GM18951 (cell line): ENCODE measurements at regions of chr1 and their contacts with region 1.

Region 1: DNA sequence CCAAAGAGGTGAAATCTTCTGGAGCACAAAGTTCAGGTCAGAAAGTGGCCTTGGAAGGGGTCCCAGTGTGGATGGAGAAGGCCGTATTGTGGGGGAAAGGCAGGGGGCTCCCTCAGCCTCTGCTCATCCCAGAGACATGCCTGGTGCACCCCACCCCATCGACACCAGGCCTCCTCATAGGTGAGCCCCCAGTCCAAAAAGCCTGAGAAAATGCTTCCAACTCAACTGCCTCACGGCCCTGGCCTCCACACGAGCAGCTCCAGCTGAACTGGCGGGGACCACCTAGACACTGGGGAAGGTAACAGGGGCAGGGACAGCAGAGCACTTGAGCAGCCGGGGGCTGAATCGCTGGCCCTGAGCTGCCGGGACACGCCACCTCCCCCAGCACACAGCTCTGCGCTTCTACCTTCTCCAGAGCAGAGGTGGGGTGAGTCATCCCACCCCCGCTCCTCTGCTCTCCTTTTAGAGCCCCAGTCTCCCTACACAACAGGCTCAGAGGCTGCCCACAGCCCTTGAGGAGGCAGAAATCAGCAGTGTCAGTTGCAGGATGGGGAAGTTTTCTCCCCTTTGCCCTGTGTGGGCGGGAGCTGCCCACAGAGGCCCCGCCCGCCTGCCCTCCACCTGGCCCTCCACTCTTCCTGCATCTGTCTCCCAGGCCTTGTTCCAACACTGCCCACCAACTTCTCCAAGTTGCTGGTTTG is 94.5 kb downstream of the STUM start:
- POLR2A ChIP-seq: no peak

Region 2: GRCh38 chr1:226466296-226466695 is 176.7 kb before region 1 on chr1:
- in situ Hi-C with region 1: no loop called
- POLR2A ChIP-seq: no peak

Region 3: DNA sequence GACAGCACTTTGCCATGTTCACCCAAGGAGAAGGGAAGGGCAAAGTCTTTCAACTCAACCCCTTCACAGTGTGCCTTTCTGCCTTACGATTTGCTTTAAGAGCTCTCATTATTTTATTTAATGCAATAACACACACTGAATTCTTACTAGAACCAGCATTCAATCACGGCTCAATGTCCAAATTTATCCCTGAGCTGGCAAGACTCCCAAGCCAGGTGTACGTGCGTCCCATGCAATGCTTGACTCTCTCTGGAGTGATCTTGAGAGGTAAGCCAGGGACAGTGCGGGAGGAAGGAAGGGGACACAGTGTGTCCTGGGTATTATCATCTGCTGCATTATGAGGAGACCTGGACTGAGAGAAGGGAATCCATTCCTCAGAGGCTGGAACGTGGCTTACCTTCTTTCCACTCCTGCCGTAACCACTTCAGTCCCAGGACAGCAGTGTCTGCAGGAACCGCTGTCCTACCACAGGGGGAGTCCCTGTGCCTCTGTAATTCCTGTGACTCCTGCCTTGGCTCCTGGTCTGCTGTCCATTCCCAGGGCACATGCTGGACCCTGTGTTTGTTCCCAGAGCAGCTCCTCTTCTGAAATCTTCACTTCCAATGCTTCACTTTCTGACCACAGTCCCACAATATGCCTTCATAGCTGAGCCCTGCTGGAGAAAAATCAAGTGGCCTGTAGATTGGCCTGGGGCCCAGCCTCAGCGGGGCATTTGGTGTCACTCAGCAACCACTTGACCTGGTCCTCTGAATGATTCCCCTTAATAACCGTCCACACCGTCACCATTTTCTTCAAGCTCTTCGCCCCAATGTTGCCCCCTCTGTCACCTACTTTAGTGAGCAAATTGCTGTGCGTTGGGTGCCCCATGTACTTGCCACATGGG is 123.1 kb before region 1 on chr1:
- in situ Hi-C with region 1: no loop called
- POLR2A ChIP-seq: no peak

Region 4: GRCh38 chr1:226547754-226548191 is 95.3 kb before region 1 on chr1:
- in situ Hi-C with region 1: no loop called
- POLR2A ChIP-seq: no peak

Region 5: DNA sequence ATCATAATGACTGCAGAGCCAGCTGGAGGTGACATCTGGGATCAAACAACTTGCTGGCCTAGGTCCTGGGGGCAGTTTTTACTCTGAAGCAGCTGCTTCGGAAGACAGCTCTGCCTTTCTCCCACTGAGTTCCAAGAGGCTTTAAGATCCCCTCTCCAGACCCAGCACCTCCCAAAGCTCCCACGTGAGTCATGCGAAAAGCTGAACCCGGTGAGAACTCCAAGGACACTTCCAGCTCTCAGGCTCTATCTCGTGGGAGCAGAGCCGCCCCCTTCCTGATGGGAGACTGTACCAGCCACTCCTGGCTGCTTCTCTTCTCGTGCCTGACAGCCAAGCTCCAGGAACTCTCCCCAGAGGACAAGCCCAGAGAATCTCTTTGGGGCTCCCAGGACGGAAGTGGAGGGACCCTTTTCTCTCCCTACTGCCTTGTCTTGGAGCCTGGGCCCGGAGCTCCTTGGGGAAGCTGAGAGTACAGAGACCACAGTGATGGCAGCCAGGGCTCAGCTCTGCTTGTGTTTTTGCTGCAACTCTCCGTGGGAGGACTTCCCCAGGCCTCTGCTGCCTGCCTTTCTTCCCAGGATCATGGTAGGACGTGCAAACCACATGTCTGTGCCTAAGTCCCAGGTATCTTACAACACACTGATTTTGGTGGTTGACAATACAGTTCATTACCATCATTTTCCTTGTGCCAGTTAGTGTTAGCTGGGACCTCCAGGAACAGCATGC is 53.9 kb before region 1 on chr1:
- in situ Hi-C with region 1: no loop called
- POLR2A ChIP-seq: no peak

Region 6: DNA sequence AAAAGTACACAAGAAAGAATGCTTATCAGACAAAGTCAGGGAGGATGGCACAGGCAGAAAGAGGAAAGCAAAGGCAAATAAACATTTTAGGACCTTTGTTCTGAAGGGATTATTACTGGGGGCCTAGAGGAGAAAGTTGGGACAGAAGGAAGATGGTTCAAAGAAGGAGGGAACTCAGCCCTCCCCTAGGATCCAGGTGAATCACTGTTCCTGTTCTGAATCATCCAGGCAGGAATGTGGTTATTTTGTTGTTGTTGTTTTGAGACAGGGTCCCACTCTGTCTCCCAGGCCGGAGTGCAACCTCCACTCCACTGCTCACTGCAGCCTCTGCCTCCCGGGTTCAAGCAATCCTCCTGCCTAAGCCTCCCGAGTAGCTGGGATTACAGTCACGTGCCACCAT is 188.9 kb after region 1 on chr1:
- in situ Hi-C with region 1: loop called (anchors 5 kb)
- POLR2A ChIP-seq: no peak